ENCODE measurements at regions of chr10 and their contacts with region 1.

Region 1: DNA sequence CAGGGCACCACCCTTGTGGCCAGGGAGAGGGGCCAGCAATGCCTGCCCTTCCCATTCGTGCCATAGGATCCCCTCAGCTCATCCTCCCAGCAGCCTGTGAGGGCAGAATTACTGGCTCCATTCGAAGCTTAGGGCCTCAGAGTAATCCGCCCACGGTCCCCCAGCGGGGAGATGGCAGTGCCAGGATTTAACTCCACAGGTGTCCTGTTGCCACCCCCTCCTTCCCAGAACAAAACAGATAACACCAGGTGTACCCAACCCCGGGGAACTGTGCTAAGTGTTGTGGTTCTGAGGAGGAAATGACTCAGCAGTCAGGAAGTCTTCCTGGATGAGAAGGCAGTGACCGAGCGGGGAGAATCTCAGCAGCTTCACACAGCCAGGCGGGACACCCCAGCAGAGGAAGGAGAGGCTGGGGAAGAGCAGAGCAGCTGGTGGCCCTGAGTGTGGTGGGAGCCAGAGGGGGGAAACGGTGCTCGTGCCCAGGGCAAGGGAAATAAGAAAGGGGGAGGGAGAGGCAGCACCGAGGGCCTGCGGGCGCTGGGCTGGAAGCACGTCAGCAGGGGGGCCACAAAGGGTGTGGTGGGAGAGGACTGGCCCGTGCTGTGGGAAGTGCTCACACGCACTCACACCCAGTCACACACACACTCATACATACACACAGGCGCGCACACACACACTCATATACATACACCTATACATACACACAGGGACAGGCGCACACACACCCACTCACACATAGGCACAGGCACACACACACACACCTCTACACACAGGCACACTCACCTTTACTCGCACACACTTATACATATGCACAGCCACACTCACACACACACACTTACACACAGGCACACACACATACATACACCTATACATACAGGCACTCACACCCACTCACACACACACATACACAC is 59.8 kb upstream of the CHST15 start:
- DNase-seq: peak; percentile 84 to 99
- H3K4me3 ChIP-seq: peak overlapping the region; percentile 41; the same call in 1 of the 2 replicates
- H3K27ac ChIP-seq: peak overlapping the region; percentile 94
- H3K4me1 ChIP-seq: peaks cover 47% of the 10 kb centered on the region
- H3K27me3 ChIP-seq: no peaks in the 10 kb centered on the region
- CTCF ChIP-seq: no peak

Region 2: GRCh38 chr10:124106241-124106879 is 46.8 kb before region 1 on chr10:
- CTCF ChIA-PET with region 1: no interaction called
- POLR2A ChIA-PET with region 1: interaction called, 3 read pairs
- intact Hi-C with region 1: loop called (anchors 5 kb)
- DNase-seq: peak; percentile 66 to 90
- H3K4me3 ChIP-seq: peak overlapping the region; percentile 48; the same call in 1 of the 2 replicates
- H3K27ac ChIP-seq: peak overlapping the region; percentile 95
- H3K4me1 ChIP-seq: peaks cover 38% of the 10 kb centered on the region
- H3K27me3 ChIP-seq: no peaks in the 10 kb centered on the region
- CTCF ChIP-seq: no peak

Region 3: DNA sequence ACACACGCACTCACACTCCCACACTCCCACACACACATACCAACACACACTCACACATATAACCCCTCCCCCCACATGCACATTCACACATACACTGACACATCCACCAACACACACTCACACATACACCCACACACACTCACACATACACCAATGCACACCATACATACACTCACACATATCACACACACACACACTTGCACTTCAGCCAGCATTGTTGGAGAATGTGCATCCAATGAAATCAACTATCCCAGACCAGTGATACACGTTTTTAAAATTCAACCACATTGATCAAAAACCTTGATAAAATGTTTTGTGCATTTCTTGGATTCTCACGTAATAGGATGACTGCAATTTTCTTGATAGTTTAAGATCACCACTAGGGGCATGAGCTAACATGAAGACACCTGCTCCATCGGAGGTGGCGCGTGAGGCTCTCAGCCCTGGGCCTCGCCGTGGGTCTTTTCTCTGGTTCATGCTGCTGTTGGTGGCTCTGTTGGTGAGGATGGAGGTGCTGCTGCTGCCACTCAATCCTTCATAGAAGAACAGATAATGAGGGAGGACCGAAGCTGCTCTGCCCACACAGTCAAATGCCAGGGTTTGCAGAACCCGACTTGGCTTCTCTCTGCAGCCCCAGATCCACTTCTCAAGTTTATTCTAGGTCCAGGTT is 27.6 kb before region 1 on chr10:
- CTCF ChIA-PET with region 1: interaction called, 4 read pairs
- POLR2A ChIA-PET with region 1: interaction called, 6 read pairs
- intact Hi-C with region 1: loop called (anchors 2 kb)
- DNase-seq: peak; percentile 28 to 78
- H3K4me3 ChIP-seq: no peak overlapping the region
- H3K27ac ChIP-seq: peak overlapping the region; percentile 22; the same call in 1 of the 2 replicates
- H3K4me1 ChIP-seq: peaks cover 6% of the 10 kb centered on the region
- H3K27me3 ChIP-seq: no peaks in the 10 kb centered on the region
- CTCF ChIP-seq: peak; percentile 58

Region 4: GRCh38 chr10:124138195-124138882 is 14.8 kb before region 1 on chr10:
- CTCF ChIA-PET with region 1: no interaction called
- POLR2A ChIA-PET with region 1: no interaction called
- intact Hi-C with region 1: no loop called
- DNase-seq: no peak
- H3K4me3 ChIP-seq: no peak overlapping the region
- H3K27ac ChIP-seq: no peak overlapping the region
- H3K4me1 ChIP-seq: no peaks in the 10 kb centered on the region
- H3K27me3 ChIP-seq: no peaks in the 10 kb centered on the region
- CTCF ChIP-seq: no peak

Region 5: GRCh38 chr10:124388823-124389612 is 235.8 kb after region 1 on chr10:
- CTCF ChIA-PET with region 1: no interaction called
- POLR2A ChIA-PET with region 1: no interaction called
- intact Hi-C with region 1: loop called (anchors 10 kb)
- DNase-seq: peak; percentile 55 to 85
- H3K4me3 ChIP-seq: peak overlapping the region; percentile 46; the same call in 1 of the 2 replicates
- H3K27ac ChIP-seq: no peak overlapping the region
- H3K4me1 ChIP-seq: peaks cover 13% of the 10 kb centered on the region
- H3K27me3 ChIP-seq: no peaks in the 10 kb centered on the region
- CTCF ChIP-seq: peak; percentile 80